PC-3 (cell line): ENCODE measurements at regions of chr2 and their contacts with region 1.

Region 1: GRCh38 chr2:215299337-215299859 is 12.5 kb upstream of the ATIC start:
- DNase-seq: no peak
- ATAC-seq: no peak
- H3K4me3 ChIP-seq: no peak overlapping the region
- H3K27ac ChIP-seq: no peak overlapping the region
- H3K4me1 ChIP-seq: peaks cover 12% of the 10 kb centered on the region
- H3K27me3 ChIP-seq: no peaks in the 10 kb centered on the region
- CTCF ChIP-seq: no peak

Region 2: GRCh38 chr2:215311625-215312396 is 12.4 kb after region 1 on chr2 and contains the start of gene ATIC:
- CTCF ChIA-PET with region 1: interaction called, 11 read pairs
- POLR2A ChIA-PET with region 1: no interaction called
- intact Hi-C with region 1: no loop called
- DNase-seq: peak; percentile 95
- ATAC-seq: peak; percentile 98
- H3K4me3 ChIP-seq: peak within 1 kb of the TSS; percentile 96
- H3K27ac ChIP-seq: peak within 1 kb of the TSS; percentile 72
- H3K4me1 ChIP-seq: peaks cover 49% of the 10 kb centered on the region
- H3K27me3 ChIP-seq: no peaks in the 10 kb centered on the region
- CTCF ChIP-seq: no peak
- total RNA-seq, gene ATIC: 41.7 and 78.8 TPM in 2 replicates